H1 (cell line): ENCODE measurements at regions of chr10 and their contacts with region 1.

Region 1: GRCh38 chr10:84548869-84549268 is 220.5 kb downstream of the CCSER2 start:
- DNase-seq: peak in 1 of 2 experiments; percentile 63
- H3K4me3 ChIP-seq: no peak overlapping the region
- H3K27ac ChIP-seq: no peak overlapping the region
- H3K4me1 ChIP-seq: no peaks in the 10 kb centered on the region
- H3K27me3 ChIP-seq: no peaks in the 10 kb centered on the region
- CTCF ChIP-seq: peak; percentile 69 to 94 (median 86)
- EP300 ChIP-seq: no peak
- POLR2A ChIP-seq: no peak
- RAD21 ChIP-seq: peak; percentile 44 to 50

Region 2: DNA sequence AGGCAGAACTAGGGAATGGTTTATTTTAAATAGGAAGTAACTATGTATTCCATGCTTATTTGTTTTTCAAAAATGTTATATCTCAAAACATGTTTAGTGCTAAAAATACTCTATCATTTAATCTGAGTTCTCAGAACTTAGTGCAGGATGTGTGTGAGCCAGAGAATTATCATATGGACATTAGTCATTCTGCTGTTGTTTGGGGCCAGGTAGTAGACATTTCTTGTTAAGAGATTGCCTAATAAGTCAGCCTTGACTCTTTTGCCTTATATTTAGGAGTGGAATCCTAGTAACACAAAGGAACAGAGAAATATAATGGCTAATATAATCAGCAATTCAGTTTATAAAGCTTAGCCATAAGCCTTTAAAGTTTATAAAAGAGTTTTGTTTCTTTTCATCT is 70.7 kb before region 1 on chr10:
- CTCF ChIA-PET with region 1: no interaction called
- POLR2A ChIA-PET with region 1: no interaction called
- DNase-seq: no peak
- H3K4me3 ChIP-seq: no peak overlapping the region
- H3K27ac ChIP-seq: no peak overlapping the region
- H3K4me1 ChIP-seq: no peaks in the 10 kb centered on the region
- H3K27me3 ChIP-seq: no peaks in the 10 kb centered on the region
- CTCF ChIP-seq: no peak
- EP300 ChIP-seq: no peak
- POLR2A ChIP-seq: no peak
- RAD21 ChIP-seq: no peak

Region 3: GRCh38 chr10:84563868-84564267 is 15.0 kb after region 1 on chr10:
- CTCF ChIA-PET with region 1: interaction called, 53 read pairs
- POLR2A ChIA-PET with region 1: no interaction called
- DNase-seq: no peak
- H3K4me3 ChIP-seq: no peak overlapping the region
- H3K27ac ChIP-seq: no peak overlapping the region
- H3K4me1 ChIP-seq: peaks cover 0 to 9% (median 6%) of the 10 kb centered on the region in 4 experiments; a peak in 3 of 7 replicates
- H3K27me3 ChIP-seq: no peaks in the 10 kb centered on the region
- CTCF ChIP-seq: no peak
- EP300 ChIP-seq: no peak
- POLR2A ChIP-seq: no peak
- RAD21 ChIP-seq: no peak

Region 4: DNA sequence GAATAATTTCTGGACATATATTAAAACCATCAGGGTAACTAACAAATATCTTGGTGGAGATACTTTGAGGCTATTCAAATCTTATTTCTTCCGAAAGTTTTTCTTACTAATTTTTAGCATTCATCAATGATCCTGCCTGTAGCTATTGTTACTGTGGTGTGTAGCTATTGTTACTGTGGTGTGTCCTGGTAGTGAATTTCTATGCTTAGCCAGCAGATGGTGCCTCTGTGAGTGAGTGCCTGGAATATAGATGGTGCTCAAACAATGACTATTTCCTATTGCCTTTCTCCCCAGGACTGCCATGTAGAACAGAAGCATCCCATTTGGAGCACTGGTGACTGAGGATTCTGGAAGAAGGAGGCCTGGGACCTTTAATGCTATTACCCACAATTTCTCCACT is 25.2 kb after region 1 on chr10:
- CTCF ChIA-PET with region 1: interaction called, 53 read pairs
- POLR2A ChIA-PET with region 1: no interaction called
- DNase-seq: no peak
- H3K4me3 ChIP-seq: no peak overlapping the region
- H3K27ac ChIP-seq: no peak overlapping the region
- H3K4me1 ChIP-seq: no peaks in the 10 kb centered on the region; a peak in 1 of 7 replicates
- H3K27me3 ChIP-seq: no peaks in the 10 kb centered on the region
- CTCF ChIP-seq: peak in 2 of 3 experiments; percentile 49 to 60; a peak in 3 of 4 replicates
- EP300 ChIP-seq: no peak
- POLR2A ChIP-seq: no peak
- RAD21 ChIP-seq: peak; percentile 38 to 46

Region 5: GRCh38 chr10:84599254-84599653 is 50.4 kb after region 1 on chr10:
- CTCF ChIA-PET with region 1: interaction called, 140 read pairs
- POLR2A ChIA-PET with region 1: no interaction called
- DNase-seq: no peak
- H3K4me3 ChIP-seq: no peak overlapping the region
- H3K27ac ChIP-seq: no peak overlapping the region
- H3K4me1 ChIP-seq: peaks cover 0 to 7% (median 4%) of the 10 kb centered on the region in 4 experiments; a peak in 4 of 7 replicates
- H3K27me3 ChIP-seq: peaks cover 7 to 25% (median 21%) of the 10 kb centered on the region in 4 experiments
- CTCF ChIP-seq: peak; percentile 44 to 51 (median 50)
- EP300 ChIP-seq: no peak
- POLR2A ChIP-seq: no peak
- RAD21 ChIP-seq: peak in 1 of 2 experiments; percentile 28; a peak in 2 of 4 replicates

Region 6: DNA sequence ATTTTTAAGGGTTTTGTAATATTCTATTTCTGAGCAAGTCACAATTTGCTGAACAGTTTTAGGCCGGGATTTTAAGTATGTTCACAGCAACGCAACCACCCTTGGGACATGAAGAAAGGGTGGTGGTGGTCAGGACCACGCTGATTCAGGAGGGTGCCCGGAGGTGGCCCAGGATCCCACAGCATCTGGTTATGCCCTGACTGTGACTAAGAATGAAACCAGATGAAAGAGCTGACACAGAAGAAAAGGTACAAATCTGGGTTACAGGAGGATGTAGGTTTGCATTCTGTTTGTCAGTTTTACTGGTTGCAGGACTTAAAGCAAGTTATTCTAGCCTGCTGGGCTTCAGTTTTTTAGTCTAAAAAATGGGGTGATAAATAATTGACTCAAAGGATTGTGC is 59.3 kb after region 1 on chr10:
- CTCF ChIA-PET with region 1: interaction called, 140 read pairs
- POLR2A ChIA-PET with region 1: no interaction called
- DNase-seq: no peak
- H3K4me3 ChIP-seq: no peak overlapping the region
- H3K27ac ChIP-seq: no peak overlapping the region
- H3K4me1 ChIP-seq: peaks cover 2 to 7% (median 5%) of the 10 kb centered on the region in 4 experiments; a peak in 5 of 7 replicates
- H3K27me3 ChIP-seq: peaks cover under 1 to 12% (median 12%) of the 10 kb centered on the region in 4 experiments
- CTCF ChIP-seq: no peak
- EP300 ChIP-seq: no peak
- POLR2A ChIP-seq: no peak
- RAD21 ChIP-seq: no peak

Region 7: GRCh38 chr10:84862551-84862950 is 313.7 kb after region 1 on chr10:
- CTCF ChIA-PET with region 1: no interaction called
- POLR2A ChIA-PET with region 1: no interaction called
- DNase-seq: no peak
- H3K4me3 ChIP-seq: no peak overlapping the region
- H3K27ac ChIP-seq: no peak overlapping the region
- H3K4me1 ChIP-seq: peaks cover 0 to 5% (median 2%) of the 10 kb centered on the region in 4 experiments; a peak in 3 of 7 replicates
- H3K27me3 ChIP-seq: no peaks in the 10 kb centered on the region
- CTCF ChIP-seq: no peak
- EP300 ChIP-seq: no peak
- POLR2A ChIP-seq: no peak
- RAD21 ChIP-seq: no peak